ENCODE measurements at regions of chr16 and their contacts with region 1.

Region 1: GRCh38 chr16:46689365-46690280 is at the start of gene ORC6:
- DNase-seq: peak; percentile 99
- H3K4me3 Mint-ChIP-seq: no peak within 1 kb of the TSS
- H3K27ac Mint-ChIP-seq: no peak within 1 kb of the TSS
- H3K4me1 Mint-ChIP-seq: peaks cover 34% of the 10 kb centered on the region
- H3K27me3 Mint-ChIP-seq: no peaks in the 10 kb centered on the region
- total RNA-seq, gene ORC6: 64.3 and 66.3 TPM in 2 replicates

Region 2: GRCh38 chr16:46621006-46621933 is 68.4 kb before region 1 on chr16 and contains the start of gene SHCBP1:
- intact Hi-C with region 1: loop called (anchors 1 kb)
- DNase-seq: peak; percentile 96
- H3K4me3 Mint-ChIP-seq: peak within 1 kb of the TSS; percentile 97
- H3K27ac Mint-ChIP-seq: peak within 1 kb of the TSS; percentile 97
- H3K4me1 Mint-ChIP-seq: peaks cover 23% of the 10 kb centered on the region
- H3K27me3 Mint-ChIP-seq: no peaks in the 10 kb centered on the region
- total RNA-seq, gene SHCBP1: 43.9 and 47.6 TPM in 2 replicates

Region 3: DNA sequence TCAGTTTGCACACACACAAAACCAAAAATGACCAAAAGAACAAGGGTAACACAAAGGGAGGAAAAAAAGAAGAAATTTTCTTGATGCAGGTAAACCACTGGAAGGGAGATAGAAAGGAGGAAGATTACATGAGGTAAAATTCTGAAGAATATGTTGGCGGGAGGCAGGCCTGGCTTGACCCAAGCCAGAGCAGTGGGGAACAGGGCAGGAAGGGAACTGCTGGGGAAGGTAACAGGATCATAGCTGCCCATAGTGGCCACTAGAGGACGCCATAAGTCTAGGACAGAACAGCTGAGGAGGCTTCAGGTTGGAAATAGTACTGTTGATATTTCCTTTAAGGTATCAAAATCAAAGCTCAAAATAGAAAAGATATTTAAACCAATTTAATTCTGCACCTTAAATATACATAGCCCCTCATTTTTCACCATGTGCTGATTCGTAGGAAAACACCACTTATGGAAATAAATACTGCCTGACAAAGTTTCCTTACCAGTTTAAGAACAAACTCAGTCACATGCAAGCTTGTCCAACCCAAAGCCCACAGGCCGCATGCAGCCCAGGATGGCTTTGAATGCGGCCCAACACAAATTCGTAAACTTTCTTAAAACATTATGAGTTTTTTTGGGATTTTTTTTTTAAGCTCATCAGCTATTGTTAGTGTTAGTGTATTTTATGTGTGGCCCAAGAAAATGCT is 16.2 kb before region 1 on chr16:
- intact Hi-C with region 1: loop called (anchors 1 kb)
- DNase-seq: peak; percentile 84
- H3K4me3 Mint-ChIP-seq: no peak overlapping the region
- H3K27ac Mint-ChIP-seq: no peak overlapping the region
- H3K4me1 Mint-ChIP-seq: peaks cover 3% of the 10 kb centered on the region
- H3K27me3 Mint-ChIP-seq: no peaks in the 10 kb centered on the region

Region 4: GRCh38 chr16:46830902-46831647 is 141.5 kb after region 1 on chr16 and contains the start of gene C16orf87:
- intact Hi-C with region 1: loop called (anchors 1 kb)
- DNase-seq: peak; percentile 98
- H3K4me3 Mint-ChIP-seq: peak within 1 kb of the TSS; percentile 95
- H3K27ac Mint-ChIP-seq: peak within 1 kb of the TSS; percentile 99
- H3K4me1 Mint-ChIP-seq: peaks cover 30% of the 10 kb centered on the region
- H3K27me3 Mint-ChIP-seq: peaks cover 17% of the 10 kb centered on the region
- total RNA-seq, gene C16orf87: 32.0 and 32.7 TPM in 2 replicates

Region 5: GRCh38 chr16:46883690-46884512 is 194.3 kb after region 1 on chr16 and contains the start of gene GPT2:
- intact Hi-C with region 1: loop called (anchors 1 kb)
- DNase-seq: peak; percentile 96
- H3K4me3 Mint-ChIP-seq: peak within 1 kb of the TSS; percentile 85
- H3K27ac Mint-ChIP-seq: peak within 1 kb of the TSS; percentile 90
- H3K4me1 Mint-ChIP-seq: peaks cover 14% of the 10 kb centered on the region
- H3K27me3 Mint-ChIP-seq: peaks cover 31% of the 10 kb centered on the region
- total RNA-seq, gene GPT2: 15.7 and 16.0 TPM in 2 replicates

Region 6: GRCh38 chr16:46908540-46909372 is 219.1 kb after region 1 on chr16:
- intact Hi-C with region 1: loop called (anchors 5 kb)
- DNase-seq: peak; percentile 88
- H3K4me3 Mint-ChIP-seq: no peak overlapping the region
- H3K27ac Mint-ChIP-seq: peak overlapping the region; percentile 54
- H3K4me1 Mint-ChIP-seq: peaks cover 11% of the 10 kb centered on the region
- H3K27me3 Mint-ChIP-seq: no peaks in the 10 kb centered on the region

Region 7: GRCh38 chr16:47460711-47461597 is 771.3 kb after region 1 on chr16 and contains the starts of genes ITFG1 and PHKB:
- intact Hi-C with region 1: loop called (anchors 5 kb)
- DNase-seq: peak; percentile 99
- H3K4me3 Mint-ChIP-seq: peak within 1 kb of the TSS; percentile 94
- H3K27ac Mint-ChIP-seq: peak within 1 kb of the TSS; percentile 97
- H3K4me1 Mint-ChIP-seq: peaks cover 36% of the 10 kb centered on the region
- H3K27me3 Mint-ChIP-seq: no peaks in the 10 kb centered on the region
- total RNA-seq, gene ITFG1: 26.1 and 28.5 TPM in 2 replicates
- total RNA-seq, gene PHKB: 23.7 and 27.9 TPM in 2 replicates